ENCODE measurements at regions of chr12 and their contacts with region 1.

Region 1: DNA sequence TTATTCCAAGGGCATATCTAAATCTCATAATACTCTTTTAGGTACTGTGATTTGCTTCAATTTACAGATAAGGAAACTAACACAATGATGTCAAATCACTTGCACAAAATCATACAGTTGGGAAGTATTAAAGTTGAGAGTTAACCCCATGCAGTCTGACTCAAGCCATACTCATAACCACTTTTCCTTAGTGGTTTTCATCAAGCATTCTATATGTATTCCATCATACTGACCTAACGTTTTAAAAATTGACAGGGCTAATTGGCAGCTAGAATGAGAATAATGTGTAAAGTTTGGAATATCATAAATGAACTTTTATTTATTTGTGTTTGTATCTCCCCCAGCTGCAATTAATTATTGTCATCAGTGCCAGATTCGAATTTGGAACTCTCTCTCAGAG is 20.9 kb downstream of the PUS7L start:
- DNase-seq: peak; percentile 68
- ATAC-seq: peak; percentile 67
- H3K4me3 ChIP-seq: no peak overlapping the region
- H3K27ac ChIP-seq: no peak overlapping the region
- H3K4me1 ChIP-seq: peaks cover 23% of the 10 kb centered on the region
- H3K27me3 ChIP-seq: no peaks in the 10 kb centered on the region
- CTCF ChIP-seq: no peak

Region 2: GRCh38 chr12:42291680-42292079 is 1446.0 kb before region 1 on chr12:
- CTCF ChIA-PET with region 1: interaction called, 11 read pairs
- POLR2A ChIA-PET with region 1: no interaction called
- intact Hi-C with region 1: no loop called
- DNase-seq: no peak
- ATAC-seq: no peak
- H3K4me3 ChIP-seq: no peak overlapping the region
- H3K27ac ChIP-seq: no peak overlapping the region
- H3K4me1 ChIP-seq: no peaks in the 10 kb centered on the region
- H3K27me3 ChIP-seq: no peaks in the 10 kb centered on the region
- CTCF ChIP-seq: no peak

Measured in PC-3 (cell line).